ENCODE measurements at regions of chr16 and their contacts with region 1.

Region 1: DNA sequence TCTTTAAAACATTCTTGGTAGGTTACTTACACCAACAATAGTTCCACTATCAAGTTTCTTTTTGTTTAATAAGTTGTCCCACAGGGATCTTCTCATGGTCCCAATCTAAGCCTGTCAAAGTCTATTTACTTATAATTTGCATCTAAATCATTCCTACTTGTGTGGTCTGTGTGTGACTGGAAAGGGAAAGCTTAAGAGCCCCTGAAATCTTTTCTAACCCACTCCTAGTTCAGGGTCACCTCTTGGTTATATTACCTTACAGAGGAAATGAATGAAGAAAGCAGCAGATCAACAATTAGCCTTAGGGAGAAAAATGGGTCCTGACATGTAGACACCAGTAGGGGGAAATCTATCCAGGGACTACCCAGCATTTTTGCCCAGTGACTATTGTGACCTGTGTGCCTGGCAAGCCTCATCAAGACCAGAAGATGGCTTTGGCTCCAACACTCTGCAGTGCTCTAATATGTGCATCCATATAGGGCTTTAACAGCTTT is 110.4 kb upstream of the HAS3 start:
- DNase-seq: no peak

Region 2: GRCh38 chr16:68800257-68800875 is 194.7 kb before region 1 on chr16:
- intact Hi-C with region 1: no loop called
- DNase-seq: peak in 6 of 10 donors; percentile 13 to 92 (median 60)

Region 3: DNA sequence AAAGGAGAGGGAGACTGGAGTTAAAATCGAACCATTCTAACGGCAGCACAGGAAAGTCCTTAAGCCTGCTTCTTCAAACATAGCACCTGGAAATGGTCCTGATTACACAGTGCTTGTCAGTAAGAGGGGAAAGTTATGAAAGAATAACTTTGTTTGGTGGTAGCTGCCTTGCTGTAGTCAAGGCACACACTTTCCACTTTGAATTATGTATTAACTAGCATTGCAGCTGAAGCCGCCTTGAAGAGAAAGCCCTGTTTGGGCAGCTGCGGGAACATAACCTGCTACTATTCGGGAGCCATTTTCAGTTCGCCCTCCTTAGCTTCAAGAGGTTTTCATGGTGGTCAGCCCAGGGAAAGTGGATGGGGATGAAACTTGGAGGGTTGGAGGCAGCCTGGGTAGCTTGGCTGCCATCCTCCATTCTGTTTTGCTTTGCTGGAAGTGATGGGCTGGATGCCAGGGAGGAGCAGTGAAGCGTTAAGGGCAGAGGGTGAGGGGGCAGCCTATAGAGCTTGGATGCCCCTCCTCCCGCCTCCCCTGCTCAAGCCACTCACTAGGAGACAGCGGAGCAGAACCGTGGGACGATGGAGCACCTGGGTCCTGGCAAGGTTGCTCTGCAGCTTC is 105.1 kb after region 1 on chr16:
- intact Hi-C with region 1: loop called (anchors 5 kb)
- DNase-seq: peak in 3 of 10 donors; percentile 43 to 73 (median 55)

Measured in posterior cingulate gyrus (tissue), 11 donors.